ENCODE measurements at regions of chr2 and their contacts with region 1.

Region 1: GRCh38 chr2:152047819-152048471 is 50.9 kb downstream of the CACNB4 start:
- DNase-seq: no peak
- H3K4me3 ChIP-seq: no peak overlapping the region
- H3K27ac ChIP-seq: no peak overlapping the region
- H3K4me1 ChIP-seq: peaks cover 7 to 20% (median 10%) of the 10 kb centered on the region in 4 experiments
- H3K27me3 ChIP-seq: no peaks in the 10 kb centered on the region
- CTCF ChIP-seq: peak in 2 of 3 experiments; percentile 42 to 59; a peak in 3 of 4 replicates
- EP300 ChIP-seq: no peak
- POLR2A ChIP-seq: no peak
- RAD21 ChIP-seq: peak; percentile 11 to 42; a peak in 3 of 4 replicates

Region 2: GRCh38 chr2:151973901-151974199 is 74.1 kb before region 1 on chr2:
- CTCF ChIA-PET with region 1: no interaction called
- POLR2A ChIA-PET with region 1: no interaction called
- DNase-seq: peak; percentile 7 to 55
- H3K4me3 ChIP-seq: no peak overlapping the region
- H3K27ac ChIP-seq: no peak overlapping the region
- H3K4me1 ChIP-seq: peaks cover 0 to 5% (median 3%) of the 10 kb centered on the region in 4 experiments; a peak in 3 of 7 replicates
- H3K27me3 ChIP-seq: no peaks in the 10 kb centered on the region
- CTCF ChIP-seq: no peak
- EP300 ChIP-seq: no peak
- POLR2A ChIP-seq: no peak
- RAD21 ChIP-seq: no peak

Region 3: DNA sequence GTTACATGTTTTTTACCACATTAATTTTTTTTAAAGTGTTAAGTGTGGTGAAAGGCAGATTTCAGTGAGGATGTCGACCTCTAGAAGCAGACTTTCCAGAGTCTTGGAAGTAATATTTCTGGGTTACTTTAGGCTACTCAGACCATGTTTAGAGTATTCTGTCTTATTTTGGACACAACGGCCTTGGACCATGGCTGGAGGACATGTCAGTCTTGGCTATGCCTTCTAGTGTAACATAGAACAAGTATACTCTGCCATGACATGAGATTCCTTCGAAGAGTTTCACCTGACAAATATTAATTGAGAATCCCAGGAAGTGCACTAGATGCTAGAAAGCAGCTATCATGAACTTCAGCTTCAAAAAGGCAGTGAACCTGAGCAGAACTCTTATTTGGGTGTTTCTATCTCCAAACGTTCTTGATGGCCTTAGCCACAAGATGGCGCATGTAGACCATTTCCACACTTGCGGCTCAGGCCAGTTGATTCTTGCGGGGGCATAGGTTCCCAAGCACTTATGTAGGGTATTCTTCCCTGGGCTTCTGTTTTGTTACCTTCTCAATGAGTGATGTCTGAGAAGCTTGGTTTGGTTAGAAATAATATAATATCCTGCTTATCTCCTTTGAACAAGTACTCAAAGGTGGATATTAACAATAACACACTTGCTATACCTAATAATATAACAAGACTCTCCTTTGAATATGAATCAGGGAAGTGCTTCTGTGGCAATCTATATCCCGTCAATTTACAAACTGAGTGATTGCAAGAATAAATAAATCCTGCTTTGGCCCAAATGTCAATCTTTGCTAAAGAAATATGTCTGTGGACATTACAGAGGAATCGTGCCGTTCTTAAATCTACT is 11.1 kb before region 1 on chr2:
- CTCF ChIA-PET with region 1: interaction called, 95 read pairs
- POLR2A ChIA-PET with region 1: interaction called, 4 read pairs
- DNase-seq: peak; percentile 41 to 66
- H3K4me3 ChIP-seq: no peak overlapping the region
- H3K27ac ChIP-seq: no peak overlapping the region
- H3K4me1 ChIP-seq: peaks cover 6 to 18% (median 13%) of the 10 kb centered on the region in 4 experiments; a peak in 6 of 7 replicates
- H3K27me3 ChIP-seq: peaks cover 0 to 29% (median 14%) of the 10 kb centered on the region in 4 experiments; a peak in 5 of 7 replicates
- CTCF ChIP-seq: peak; percentile 63 to 89 (median 85)
- EP300 ChIP-seq: no peak
- POLR2A ChIP-seq: no peak
- RAD21 ChIP-seq: peak; percentile 96 to 98

Region 4: DNA sequence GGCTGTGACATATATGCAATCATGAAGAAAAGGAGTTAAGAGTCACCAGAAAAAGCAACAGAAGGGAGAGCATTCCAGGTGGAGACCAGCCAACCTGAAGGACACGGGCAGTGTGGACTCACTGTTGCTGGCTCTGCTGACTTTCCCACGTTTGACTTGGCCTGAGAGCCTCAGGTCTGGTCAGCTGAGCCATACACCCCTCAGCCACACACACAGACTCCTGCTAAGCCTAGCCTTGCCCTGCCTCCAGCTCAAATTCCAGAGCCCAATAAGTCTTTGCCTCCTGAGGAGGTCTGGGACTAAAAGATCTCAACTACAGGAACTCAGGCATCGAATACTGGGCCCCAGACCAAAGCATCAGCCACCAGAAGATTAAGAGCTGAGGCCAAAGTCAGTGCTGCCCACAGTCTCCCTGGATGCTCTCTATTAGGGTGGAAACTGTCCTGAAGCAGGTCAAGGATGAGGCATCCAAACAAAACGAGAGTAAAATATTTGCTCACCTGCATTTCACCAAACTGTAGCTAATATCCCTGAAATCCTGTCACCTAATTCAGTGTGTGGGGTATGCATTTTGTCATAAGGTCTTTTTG is 27.6 kb after region 1 on chr2:
- CTCF ChIA-PET with region 1: interaction called, 11 read pairs
- POLR2A ChIA-PET with region 1: no interaction called
- DNase-seq: no peak
- H3K4me3 ChIP-seq: no peak overlapping the region
- H3K27ac ChIP-seq: no peak overlapping the region
- H3K4me1 ChIP-seq: peaks cover 0 to 8% (median 0%) of the 10 kb centered on the region in 4 experiments; a peak in 2 of 7 replicates
- H3K27me3 ChIP-seq: no peaks in the 10 kb centered on the region
- CTCF ChIP-seq: no peak
- EP300 ChIP-seq: no peak
- POLR2A ChIP-seq: no peak
- RAD21 ChIP-seq: no peak

Region 5: DNA sequence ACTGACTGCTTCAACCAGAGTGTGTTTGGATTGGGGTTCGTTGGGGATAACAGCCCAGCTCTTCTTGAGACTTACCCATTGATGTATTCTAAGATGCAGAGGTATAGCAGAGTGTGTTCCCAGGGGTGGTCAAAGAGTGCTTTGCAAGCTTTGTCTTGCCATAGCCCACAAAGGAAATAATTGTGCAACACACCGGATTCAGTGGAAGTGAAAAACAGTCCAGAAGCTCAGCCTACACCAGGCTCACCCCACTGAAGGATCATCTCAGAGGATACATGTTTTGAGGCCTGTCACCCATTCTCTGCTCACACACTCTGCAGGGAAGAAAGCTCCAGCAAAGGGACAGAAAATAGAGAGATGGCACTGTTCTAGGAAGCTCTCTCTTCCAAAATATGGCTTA is 41.3 kb after region 1 on chr2:
- CTCF ChIA-PET with region 1: interaction called, 14 read pairs
- POLR2A ChIA-PET with region 1: no interaction called
- DNase-seq: no peak
- H3K4me3 ChIP-seq: no peak overlapping the region
- H3K27ac ChIP-seq: no peak overlapping the region
- H3K4me1 ChIP-seq: no peaks in the 10 kb centered on the region
- H3K27me3 ChIP-seq: no peaks in the 10 kb centered on the region; a peak in 1 of 7 replicates
- CTCF ChIP-seq: no peak
- EP300 ChIP-seq: no peak
- POLR2A ChIP-seq: no peak
- RAD21 ChIP-seq: no peak

Region 6: GRCh38 chr2:152240559-152241231 is 192.8 kb after region 1 on chr2:
- CTCF ChIA-PET with region 1: no interaction called
- POLR2A ChIA-PET with region 1: no interaction called
- DNase-seq: no peak
- H3K4me3 ChIP-seq: no peak overlapping the region
- H3K27ac ChIP-seq: no peak overlapping the region
- H3K4me1 ChIP-seq: no peaks in the 10 kb centered on the region
- H3K27me3 ChIP-seq: no peaks in the 10 kb centered on the region
- CTCF ChIP-seq: no peak
- EP300 ChIP-seq: no peak
- POLR2A ChIP-seq: no peak
- RAD21 ChIP-seq: no peak

Measured in H1 (cell line).